Activated CD8-positive, alpha-beta memory T cell treated with anti-CD3 and anti-CD28 coated beads, Interleukin-2, amount 10 ng/mL, durations not matched to agents 7 days and 5 days (primary cell): ENCODE measurements at regions of chr19 and their contacts with region 1.

Region 1: GRCh38 chr19:29761575-29762232 is 46.6 kb upstream of the C19orf12 start:
- DNase-seq: no peak
- ATAC-seq: no peak
- H3K4me3 Mint-ChIP-seq: no peak overlapping the region
- H3K27ac Mint-ChIP-seq: no peak overlapping the region
- H3K4me1 Mint-ChIP-seq: peaks cover 2% of the 10 kb centered on the region
- H3K27me3 Mint-ChIP-seq: peaks cover 13% of the 10 kb centered on the region

Region 2: DNA sequence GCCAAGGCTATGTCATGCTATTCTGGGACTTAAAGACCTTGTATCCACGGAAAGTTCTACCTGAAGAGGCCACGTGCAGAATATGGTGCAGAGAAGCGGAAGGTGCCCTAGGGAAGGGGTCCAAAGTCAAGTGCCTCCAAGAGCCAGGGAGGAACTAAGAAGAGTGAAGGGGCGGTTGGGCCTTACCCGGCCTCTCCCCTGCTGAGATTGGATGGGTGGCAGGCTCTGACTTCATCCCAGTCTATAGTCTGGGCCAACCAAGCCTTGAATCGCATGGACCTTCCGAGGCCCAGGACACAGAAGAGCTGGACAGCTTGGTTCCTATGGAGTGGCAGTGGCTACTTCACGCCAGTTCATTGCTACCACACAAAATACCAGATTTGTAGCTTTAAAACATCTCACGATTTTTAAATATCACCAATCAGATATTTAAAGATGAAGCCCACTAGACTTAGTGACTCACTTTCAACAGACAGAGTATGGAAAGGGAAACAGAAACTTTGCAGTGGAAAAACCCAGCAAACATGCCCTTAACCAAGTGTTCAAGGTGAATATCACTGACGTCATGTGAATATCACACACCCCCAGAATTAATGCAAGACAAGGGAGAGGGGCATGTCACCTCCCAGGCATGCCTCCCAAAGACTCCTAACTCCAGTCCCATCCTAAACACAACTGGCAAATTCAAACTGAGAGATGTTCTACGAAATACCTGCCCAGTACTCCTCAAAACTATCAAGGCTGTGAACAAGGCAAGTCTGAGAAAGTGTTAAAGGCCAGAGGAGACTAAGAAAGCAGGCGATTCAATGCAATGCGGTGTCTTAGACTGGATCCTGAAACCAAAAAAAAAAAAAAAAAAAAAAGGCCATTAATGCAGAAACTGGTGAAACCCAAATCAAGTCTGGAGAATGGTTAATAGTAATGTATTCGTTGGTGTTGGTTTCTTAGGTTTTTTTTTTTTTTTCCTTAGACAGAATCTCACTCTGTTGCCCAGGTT is 56.8 kb before region 1 on chr19:
- CTCF ChIA-PET with region 1: no interaction called
- DNase-seq: no peak
- ATAC-seq: peak; percentile 85
- H3K4me3 Mint-ChIP-seq: no peak overlapping the region
- H3K27ac Mint-ChIP-seq: peak overlapping the region; percentile 88
- H3K4me1 Mint-ChIP-seq: peaks cover 52% of the 10 kb centered on the region
- H3K27me3 Mint-ChIP-seq: no peaks in the 10 kb centered on the region

Region 3: GRCh38 chr19:29731331-29731850 is 30.3 kb before region 1 on chr19:
- CTCF ChIA-PET with region 1: interaction called, 34 read pairs
- DNase-seq: no peak
- ATAC-seq: no peak
- H3K4me3 Mint-ChIP-seq: no peak overlapping the region
- H3K27ac Mint-ChIP-seq: no peak overlapping the region
- H3K4me1 Mint-ChIP-seq: no peaks in the 10 kb centered on the region
- H3K27me3 Mint-ChIP-seq: peaks cover 38% of the 10 kb centered on the region

Region 4: DNA sequence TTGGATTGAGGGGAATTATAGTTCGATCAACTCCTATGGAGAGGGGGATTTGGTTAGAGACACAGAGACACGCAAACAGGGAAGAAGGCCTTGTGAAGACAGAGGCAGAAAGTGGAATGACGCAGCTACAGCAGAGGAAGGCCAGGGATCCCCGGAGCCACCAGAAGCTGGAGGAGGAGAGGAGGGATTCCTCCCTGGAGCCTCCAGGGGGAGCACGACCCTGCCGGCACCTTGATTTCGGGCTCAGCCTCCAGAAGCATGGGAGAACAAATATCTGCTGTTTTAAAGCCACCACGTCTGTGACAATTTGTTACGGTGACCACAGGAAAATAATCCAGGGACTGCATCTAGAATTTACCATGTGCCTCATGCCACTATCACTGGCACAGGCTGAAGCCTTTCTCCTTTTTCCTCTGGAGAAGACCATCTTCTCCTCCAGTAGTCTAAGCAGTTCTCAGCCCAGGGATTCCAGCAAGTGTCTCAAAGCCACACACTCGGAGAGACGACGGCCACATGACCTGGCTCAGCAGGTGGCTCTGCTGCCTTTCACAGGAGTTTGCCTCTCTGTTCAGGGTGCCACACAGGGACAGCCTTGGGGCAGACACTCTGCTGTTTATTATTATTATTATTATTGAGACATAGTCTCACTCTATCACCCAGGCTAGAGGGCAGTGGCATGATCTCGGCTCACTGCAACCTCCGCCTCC is 10.2 kb after region 1 on chr19:
- CTCF ChIA-PET with region 1: interaction called, 43 read pairs
- DNase-seq: no peak
- ATAC-seq: no peak
- H3K4me3 Mint-ChIP-seq: no peak overlapping the region
- H3K27ac Mint-ChIP-seq: no peak overlapping the region
- H3K4me1 Mint-ChIP-seq: peaks cover 12% of the 10 kb centered on the region
- H3K27me3 Mint-ChIP-seq: peaks cover 12% of the 10 kb centered on the region

Region 5: GRCh38 chr19:29785955-29786589 is 24.4 kb after region 1 on chr19:
- CTCF ChIA-PET with region 1: interaction called, 10 read pairs
- DNase-seq: no peak
- ATAC-seq: no peak
- H3K4me3 Mint-ChIP-seq: no peak overlapping the region
- H3K27ac Mint-ChIP-seq: no peak overlapping the region
- H3K4me1 Mint-ChIP-seq: peaks cover 3% of the 10 kb centered on the region
- H3K27me3 Mint-ChIP-seq: peaks cover 4% of the 10 kb centered on the region

Region 6: GRCh38 chr19:29858000-29858596 is 96.4 kb after region 1 on chr19:
- CTCF ChIA-PET with region 1: interaction called, 12 read pairs
- DNase-seq: peak; percentile 62
- ATAC-seq: peak; percentile 78
- H3K4me3 Mint-ChIP-seq: no peak overlapping the region
- H3K27ac Mint-ChIP-seq: no peak overlapping the region
- H3K4me1 Mint-ChIP-seq: no peaks in the 10 kb centered on the region
- H3K27me3 Mint-ChIP-seq: peaks cover 10% of the 10 kb centered on the region

Region 7: GRCh38 chr19:29887442-29887855 is 125.7 kb after region 1 on chr19:
- CTCF ChIA-PET with region 1: interaction called, 14 read pairs
- DNase-seq: peak; percentile 54
- ATAC-seq: peak; percentile 84
- H3K4me3 Mint-ChIP-seq: no peak overlapping the region
- H3K27ac Mint-ChIP-seq: no peak overlapping the region
- H3K4me1 Mint-ChIP-seq: peaks cover 22% of the 10 kb centered on the region
- H3K27me3 Mint-ChIP-seq: no peaks in the 10 kb centered on the region

Region 8: GRCh38 chr19:30029721-30030510 is 268.2 kb after region 1 on chr19:
- CTCF ChIA-PET with region 1: no interaction called
- DNase-seq: peak; percentile 54
- ATAC-seq: peak; percentile 80
- H3K4me3 Mint-ChIP-seq: no peak overlapping the region
- H3K27ac Mint-ChIP-seq: no peak overlapping the region
- H3K4me1 Mint-ChIP-seq: peaks cover 30% of the 10 kb centered on the region
- H3K27me3 Mint-ChIP-seq: no peaks in the 10 kb centered on the region